ENCODE measurements at regions of chr10 and their contacts with region 1.

Region 1: DNA sequence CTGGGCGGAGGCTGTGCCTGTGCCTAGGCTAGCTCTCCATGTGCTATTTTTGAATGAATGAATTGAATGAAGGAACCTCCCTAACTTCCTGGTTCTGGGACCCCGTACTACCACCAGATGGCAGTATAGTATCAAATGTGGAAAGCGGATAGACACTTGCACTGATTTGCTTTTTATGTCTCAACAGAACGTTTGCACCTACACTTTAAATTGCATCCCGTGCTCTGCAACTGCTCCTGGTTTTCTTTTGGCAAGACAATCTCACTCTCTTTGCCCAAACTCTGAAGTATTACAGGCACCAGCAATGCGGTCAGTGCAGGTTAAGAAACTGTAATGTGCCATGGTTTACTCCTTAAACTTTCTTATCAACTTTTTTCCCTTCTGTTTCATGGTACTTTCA is 6.5 kb downstream of the FZD8 start:
- DNase-seq: peak; percentile 55
- H3K4me3 ChIP-seq: no peak overlapping the region
- CTCF ChIP-seq: peak; percentile 90

Region 2: DNA sequence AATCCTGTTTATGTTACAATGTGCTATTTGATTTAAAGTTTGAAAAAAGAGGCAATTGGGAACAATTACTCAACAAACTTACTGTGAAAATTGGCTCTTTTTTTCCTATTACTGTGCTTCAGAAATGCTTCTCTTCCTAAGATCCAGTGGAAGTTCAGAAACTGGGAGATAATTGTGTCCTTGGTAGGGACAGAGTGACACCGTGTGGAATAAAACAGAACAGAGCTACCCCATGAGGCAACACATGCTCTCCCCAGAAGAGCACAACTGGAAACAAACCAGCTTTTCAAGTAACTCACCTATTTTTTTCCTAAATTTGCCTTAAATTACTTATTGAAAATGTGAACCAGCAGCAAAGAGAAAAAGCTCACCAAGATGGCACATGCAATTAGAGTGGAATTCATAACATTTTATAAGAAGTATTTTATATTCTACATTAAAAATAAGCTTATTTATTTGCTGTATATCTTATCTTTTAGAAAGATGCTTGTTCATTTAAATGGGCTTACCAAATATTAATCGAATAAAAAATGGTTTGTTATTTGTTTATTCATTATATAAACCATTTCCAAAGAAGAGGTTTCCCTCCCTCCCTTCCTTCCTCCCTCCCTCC is 1143.8 kb after region 1 on chr10:
- in situ Hi-C with region 1: loop called (anchors 10 kb)
- DNase-seq: peak; percentile 70
- H3K4me3 ChIP-seq: no peak overlapping the region
- CTCF ChIP-seq: peak; percentile 82